ENCODE measurements at regions of chr7 and their contacts with region 1.

Region 1: DNA sequence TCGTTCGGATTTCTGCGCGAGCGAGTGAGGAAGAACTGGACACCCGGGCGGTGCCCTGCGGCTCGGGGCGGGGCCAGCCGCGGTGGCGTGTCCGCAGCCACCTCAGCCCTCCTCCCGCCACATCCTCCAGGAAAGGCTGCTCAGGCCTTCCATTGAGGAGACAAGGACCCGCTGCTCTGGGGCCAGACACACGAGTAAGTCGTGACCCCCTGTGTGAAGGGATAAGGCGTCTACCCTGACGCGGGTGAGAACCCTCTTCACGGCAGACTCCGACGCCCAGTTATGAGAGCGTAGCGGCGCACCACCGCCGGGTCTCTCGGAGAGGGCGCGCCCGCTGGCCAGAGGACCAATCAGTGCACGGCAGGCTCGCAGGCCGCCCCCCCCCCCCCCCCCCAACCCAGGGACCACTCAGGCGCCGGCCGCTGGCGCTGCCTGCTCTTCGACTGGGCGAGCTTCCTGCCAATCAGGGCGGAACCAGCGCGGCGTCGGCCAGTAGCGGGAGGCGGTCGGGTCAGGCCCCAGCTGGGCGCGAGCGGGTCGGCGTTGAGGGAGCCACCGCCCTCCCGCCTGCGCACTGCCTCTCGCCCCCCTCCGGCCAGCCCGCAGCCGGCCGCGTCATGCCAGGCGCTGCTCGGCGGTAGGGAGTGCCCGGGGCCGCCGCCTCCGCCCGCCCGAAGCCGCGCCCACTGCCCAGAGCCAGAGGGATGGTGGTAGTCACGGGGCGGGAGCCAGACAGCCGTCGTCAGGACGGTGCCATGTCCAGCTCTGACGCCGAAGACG is at the start of gene KCTD7:
- DNase-seq: peak; percentile 97
- H3K4me3 Mint-ChIP-seq: peak within 1 kb of the TSS; percentile 83
- H3K27ac Mint-ChIP-seq: peak within 1 kb of the TSS; percentile 80
- H3K4me1 Mint-ChIP-seq: peaks cover 41% of the 10 kb centered on the region
- H3K27me3 Mint-ChIP-seq: no peaks in the 10 kb centered on the region
- total RNA-seq, gene KCTD7: 6.3 to 7.5 TPM

Region 2: GRCh38 chr7:66557608-66558143 is 70.9 kb before region 1 on chr7:
- CTCF ChIA-PET with region 1: interaction called, 3 read pairs
- intact Hi-C with region 1: loop called (anchors 2 kb)
- DNase-seq: peak; percentile 78
- H3K4me3 Mint-ChIP-seq: no peak overlapping the region
- H3K27ac Mint-ChIP-seq: no peak overlapping the region
- H3K4me1 Mint-ChIP-seq: peaks cover 3% of the 10 kb centered on the region
- H3K27me3 Mint-ChIP-seq: no peaks in the 10 kb centered on the region

Region 3: DNA sequence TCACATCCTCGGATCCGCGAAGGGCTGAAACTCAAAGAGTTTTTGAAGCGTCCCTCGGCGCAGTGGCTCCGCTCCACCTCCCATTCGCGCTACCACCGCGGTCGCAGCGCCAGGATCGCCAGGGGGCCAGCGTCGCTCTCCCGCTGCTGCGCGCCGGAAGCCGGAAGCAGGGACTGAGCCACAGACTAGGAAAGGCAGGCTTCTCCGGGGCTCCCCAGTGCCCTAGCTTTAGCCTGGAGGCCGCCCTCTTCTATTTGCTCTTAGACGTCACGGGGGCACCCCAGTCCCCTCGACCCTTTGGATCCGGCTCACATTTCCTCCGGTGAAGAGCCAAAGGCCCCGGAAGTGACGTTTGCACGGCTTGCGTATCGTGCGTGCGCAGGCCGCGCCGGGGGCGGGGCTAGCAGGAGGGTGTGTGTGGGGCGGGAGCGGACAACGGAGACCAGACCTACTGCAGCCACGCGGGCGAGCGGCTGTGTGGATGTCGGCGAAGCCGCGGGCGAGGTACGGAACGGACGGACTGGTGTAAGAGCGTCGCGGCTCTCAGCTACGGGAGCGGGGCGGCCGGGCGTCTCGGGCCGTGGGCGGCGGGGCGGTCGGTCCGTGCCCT is 25.7 kb after region 1 on chr7:
- CTCF ChIA-PET with region 1: no interaction called
- intact Hi-C with region 1: loop called (anchors 1 kb)
- DNase-seq: peak; percentile 98
- H3K4me3 Mint-ChIP-seq: peak overlapping the region; percentile 95
- H3K27ac Mint-ChIP-seq: peak overlapping the region; percentile 95
- H3K4me1 Mint-ChIP-seq: peaks cover 30% of the 10 kb centered on the region
- H3K27me3 Mint-ChIP-seq: no peaks in the 10 kb centered on the region

Region 4: GRCh38 chr7:66715676-66716075 is 87.1 kb after region 1 on chr7:
- CTCF ChIA-PET with region 1: no interaction called
- intact Hi-C with region 1: no loop called
- DNase-seq: no peak
- H3K4me3 Mint-ChIP-seq: no peak overlapping the region
- H3K27ac Mint-ChIP-seq: no peak overlapping the region
- H3K4me1 Mint-ChIP-seq: no peaks in the 10 kb centered on the region
- H3K27me3 Mint-ChIP-seq: no peaks in the 10 kb centered on the region

Region 5: GRCh38 chr7:66740302-66740979 is 111.9 kb after region 1 on chr7 and contains the start of gene RABGEF1:
- CTCF ChIA-PET with region 1: no interaction called
- intact Hi-C with region 1: loop called (anchors 1 kb)
- DNase-seq: peak; percentile 97
- H3K4me3 Mint-ChIP-seq: peak within 1 kb of the TSS; percentile 92
- H3K27ac Mint-ChIP-seq: peak within 1 kb of the TSS; percentile 92
- H3K4me1 Mint-ChIP-seq: peaks cover 47% of the 10 kb centered on the region
- H3K27me3 Mint-ChIP-seq: no peaks in the 10 kb centered on the region
- total RNA-seq, gene RABGEF1: 10.7 to 10.8 TPM